Activated naive CD4-positive, alpha-beta T cell treated with anti-CD3 and anti-CD28 coated beads for 36 hours (primary cell): ENCODE measurements at regions of chr6 and their contacts with region 1.

Region 1: GRCh38 chr6:16670183-16670582 is 91.1 kb downstream of the ATXN1 start:
- DNase-seq: no peak
- H3K4me3 Mint-ChIP-seq: no peak overlapping the region
- H3K27ac Mint-ChIP-seq: peak overlapping the region; percentile 25
- H3K4me1 Mint-ChIP-seq: peaks cover 38% of the 10 kb centered on the region
- H3K27me3 Mint-ChIP-seq: no peaks in the 10 kb centered on the region

Region 2: DNA sequence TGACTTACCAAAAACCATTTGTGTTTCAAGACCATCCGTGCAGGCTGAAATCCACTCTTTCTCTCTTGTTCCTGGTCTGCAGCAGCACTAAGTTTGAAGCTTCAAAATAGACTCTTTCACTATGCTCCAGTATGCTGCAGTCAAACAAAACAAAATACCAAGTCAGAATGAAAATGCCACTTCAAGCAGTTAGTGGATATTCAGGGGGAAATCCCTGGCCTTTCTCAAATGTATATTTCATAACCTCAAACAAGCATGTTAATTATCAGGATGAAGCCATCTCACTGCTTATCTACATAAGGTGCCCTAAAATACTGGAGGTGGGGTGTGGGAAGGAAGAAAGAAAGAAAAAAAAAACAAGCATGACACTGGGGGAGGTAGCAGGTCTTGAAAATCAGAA is 12.4 kb before region 1 on chr6:
- CTCF ChIA-PET with region 1: interaction called, 11 read pairs
- intact Hi-C with region 1: loop called (anchors 1 kb)
- DNase-seq: peak; percentile 9
- H3K4me3 Mint-ChIP-seq: peak overlapping the region; percentile 2
- H3K27ac Mint-ChIP-seq: peak overlapping the region; percentile 32
- H3K4me1 Mint-ChIP-seq: peaks cover 43% of the 10 kb centered on the region
- H3K27me3 Mint-ChIP-seq: no peaks in the 10 kb centered on the region

Region 3: GRCh38 chr6:16690608-16691198 is 20.5 kb after region 1 on chr6:
- CTCF ChIA-PET with region 1: interaction called, 3 read pairs
- intact Hi-C with region 1: loop called (anchors 1 kb)
- DNase-seq: no peak
- H3K4me3 Mint-ChIP-seq: no peak overlapping the region
- H3K27ac Mint-ChIP-seq: peak overlapping the region; percentile 59
- H3K4me1 Mint-ChIP-seq: peaks cover 77% of the 10 kb centered on the region
- H3K27me3 Mint-ChIP-seq: no peaks in the 10 kb centered on the region

Region 4: DNA sequence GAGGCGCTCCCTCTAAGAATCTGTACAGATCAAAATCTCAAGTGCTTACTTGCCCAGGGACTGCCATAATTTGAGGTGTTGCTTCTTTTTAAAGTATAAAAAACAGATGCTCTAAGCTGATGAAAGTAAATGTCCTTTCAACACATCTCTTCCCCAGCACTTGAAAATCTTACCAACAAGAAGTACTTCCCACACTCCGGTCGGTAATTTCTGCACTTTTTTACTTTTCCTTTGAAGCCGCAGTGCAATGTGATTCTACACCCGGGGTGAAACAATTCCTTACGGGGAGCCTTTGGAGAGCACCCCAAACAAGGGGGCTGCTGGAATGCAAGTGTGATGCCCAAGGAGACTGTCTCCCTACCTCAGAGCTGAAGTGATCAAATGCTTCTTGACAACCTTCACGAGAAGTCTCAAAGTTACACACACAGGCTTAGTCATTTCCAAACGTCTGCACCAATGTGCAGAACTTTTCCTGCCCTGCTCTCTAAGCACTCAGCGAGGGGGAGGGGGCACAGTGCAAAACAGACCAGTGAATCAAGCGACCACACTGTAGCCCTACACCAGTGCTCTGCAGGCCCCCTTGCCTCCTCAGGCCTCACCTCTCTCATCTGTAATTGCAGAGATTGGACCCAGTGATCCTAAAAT is 34.3 kb after region 1 on chr6:
- CTCF ChIA-PET with region 1: no interaction called
- intact Hi-C with region 1: no loop called
- DNase-seq: peak; percentile 76
- H3K4me3 Mint-ChIP-seq: peak overlapping the region; percentile 46
- H3K27ac Mint-ChIP-seq: peak overlapping the region; percentile 28
- H3K4me1 Mint-ChIP-seq: peaks cover 60% of the 10 kb centered on the region
- H3K27me3 Mint-ChIP-seq: no peaks in the 10 kb centered on the region